Activated naive CD4-positive, alpha-beta T cell treated with anti-CD3 and anti-CD28 coated beads, Interleukin-2, amount 10 ng/mL, durations not matched to agents 7 days and 5 days (primary cell): ENCODE measurements at regions of chr15 and their contacts with region 1.

Region 1: GRCh38 chr15:88246666-88247446 is 9.7 kb downstream of the NTRK3 start:
- DNase-seq: peak; percentile 76
- H3K4me3 Mint-ChIP-seq: no peak overlapping the region
- H3K27ac Mint-ChIP-seq: no peak overlapping the region
- H3K4me1 Mint-ChIP-seq: peaks cover 2% of the 10 kb centered on the region
- H3K27me3 Mint-ChIP-seq: peaks cover 41% of the 10 kb centered on the region

Region 2: DNA sequence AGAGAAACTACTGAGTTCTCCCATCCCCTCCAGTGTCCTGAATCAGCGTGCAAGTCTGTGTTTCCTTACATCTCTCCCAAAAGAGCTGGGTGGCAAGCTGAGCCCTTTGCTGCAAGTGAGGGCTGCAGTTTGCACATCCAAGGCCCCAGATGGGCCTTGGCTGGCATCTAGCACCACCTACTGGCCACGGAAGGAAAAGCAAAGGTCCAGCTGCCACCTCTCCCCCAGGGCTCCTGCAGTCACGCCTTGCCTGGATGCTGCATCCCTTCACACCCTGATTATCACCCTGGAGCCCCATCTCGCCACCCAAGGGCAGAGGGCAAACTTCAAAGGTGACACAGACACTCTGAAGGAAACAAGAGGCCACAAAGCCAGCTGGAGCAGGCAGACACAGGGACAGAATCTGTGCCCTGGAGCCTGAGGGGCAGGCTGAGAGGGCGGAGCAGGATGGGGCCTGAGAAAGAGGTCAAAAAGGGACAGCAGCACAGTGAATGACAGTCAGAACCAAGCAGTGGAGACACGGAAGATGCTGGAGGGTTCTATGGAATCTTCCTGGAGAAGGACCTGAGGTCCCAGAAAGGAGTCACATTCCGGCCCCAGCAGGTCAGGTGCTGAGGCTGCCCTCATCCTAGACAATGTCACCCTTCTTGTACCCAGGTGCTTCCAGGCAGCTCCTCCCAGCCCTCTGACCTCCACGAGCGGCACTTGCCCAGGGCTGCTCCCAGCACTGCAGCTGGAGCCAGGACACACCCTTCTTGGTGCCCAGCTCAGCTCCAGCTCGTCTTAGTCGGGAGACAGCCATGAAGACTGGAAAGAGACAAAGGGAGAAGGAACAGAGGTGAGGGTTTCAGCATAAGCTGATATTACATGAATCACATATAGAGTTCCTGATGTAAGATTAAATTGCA is 28.0 kb after region 1 on chr15:
- CTCF ChIA-PET with region 1: interaction called, 105 read pairs
- DNase-seq: peak; percentile 75
- H3K4me3 Mint-ChIP-seq: no peak overlapping the region
- H3K27ac Mint-ChIP-seq: no peak overlapping the region
- H3K4me1 Mint-ChIP-seq: no peaks in the 10 kb centered on the region
- H3K27me3 Mint-ChIP-seq: peaks cover 47% of the 10 kb centered on the region

Region 3: GRCh38 chr15:88450109-88450798 is 203.4 kb after region 1 on chr15:
- CTCF ChIA-PET with region 1: interaction called, 14 read pairs
- DNase-seq: peak; percentile 82
- H3K4me3 Mint-ChIP-seq: no peak overlapping the region
- H3K27ac Mint-ChIP-seq: no peak overlapping the region
- H3K4me1 Mint-ChIP-seq: peaks cover 2% of the 10 kb centered on the region
- H3K27me3 Mint-ChIP-seq: no peaks in the 10 kb centered on the region

Region 4: DNA sequence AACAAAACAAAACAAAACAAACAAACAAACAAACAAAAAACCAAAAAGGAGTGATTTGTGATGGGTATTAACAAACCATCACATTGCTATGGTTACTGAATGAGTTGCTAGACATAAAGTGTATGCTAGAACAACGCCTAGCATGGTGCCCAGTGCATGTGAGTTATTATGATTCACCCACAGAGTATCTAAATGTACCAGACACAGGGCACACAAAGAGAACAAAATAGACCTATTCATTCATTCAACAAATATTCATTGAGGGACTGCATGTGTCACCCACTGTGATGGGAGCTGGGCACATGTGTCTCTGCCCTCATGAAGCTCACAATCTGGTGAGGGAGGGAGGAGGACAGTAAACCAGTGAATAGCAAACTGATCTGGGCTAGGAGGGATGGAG is 544.8 kb after region 1 on chr15:
- CTCF ChIA-PET with region 1: no interaction called
- DNase-seq: no peak
- H3K4me3 Mint-ChIP-seq: no peak overlapping the region
- H3K27ac Mint-ChIP-seq: no peak overlapping the region
- H3K4me1 Mint-ChIP-seq: no peaks in the 10 kb centered on the region
- H3K27me3 Mint-ChIP-seq: peaks cover 72% of the 10 kb centered on the region